Activated CD8-positive, alpha-beta memory T cell treated with anti-CD3 and anti-CD28 coated beads, Interleukin-2, amount 10 ng/mL, durations not matched to agents 7 days and 5 days (primary cell): ENCODE measurements at regions of chr14 and their contacts with region 1.

Region 1: GRCh38 chr14:24310646-24311604 is at the start of gene LTB4R:
- DNase-seq: peak; percentile 80
- ATAC-seq: peak; percentile 90
- H3K4me3 Mint-ChIP-seq: peak within 1 kb of the TSS; percentile 75
- H3K27ac Mint-ChIP-seq: peak within 1 kb of the TSS; percentile 87
- H3K4me1 Mint-ChIP-seq: peaks cover 72% of the 10 kb centered on the region
- H3K27me3 Mint-ChIP-seq: no peaks in the 10 kb centered on the region
- total RNA-seq, gene LTB4R: 15.6 to 32.5 TPM

Region 2: DNA sequence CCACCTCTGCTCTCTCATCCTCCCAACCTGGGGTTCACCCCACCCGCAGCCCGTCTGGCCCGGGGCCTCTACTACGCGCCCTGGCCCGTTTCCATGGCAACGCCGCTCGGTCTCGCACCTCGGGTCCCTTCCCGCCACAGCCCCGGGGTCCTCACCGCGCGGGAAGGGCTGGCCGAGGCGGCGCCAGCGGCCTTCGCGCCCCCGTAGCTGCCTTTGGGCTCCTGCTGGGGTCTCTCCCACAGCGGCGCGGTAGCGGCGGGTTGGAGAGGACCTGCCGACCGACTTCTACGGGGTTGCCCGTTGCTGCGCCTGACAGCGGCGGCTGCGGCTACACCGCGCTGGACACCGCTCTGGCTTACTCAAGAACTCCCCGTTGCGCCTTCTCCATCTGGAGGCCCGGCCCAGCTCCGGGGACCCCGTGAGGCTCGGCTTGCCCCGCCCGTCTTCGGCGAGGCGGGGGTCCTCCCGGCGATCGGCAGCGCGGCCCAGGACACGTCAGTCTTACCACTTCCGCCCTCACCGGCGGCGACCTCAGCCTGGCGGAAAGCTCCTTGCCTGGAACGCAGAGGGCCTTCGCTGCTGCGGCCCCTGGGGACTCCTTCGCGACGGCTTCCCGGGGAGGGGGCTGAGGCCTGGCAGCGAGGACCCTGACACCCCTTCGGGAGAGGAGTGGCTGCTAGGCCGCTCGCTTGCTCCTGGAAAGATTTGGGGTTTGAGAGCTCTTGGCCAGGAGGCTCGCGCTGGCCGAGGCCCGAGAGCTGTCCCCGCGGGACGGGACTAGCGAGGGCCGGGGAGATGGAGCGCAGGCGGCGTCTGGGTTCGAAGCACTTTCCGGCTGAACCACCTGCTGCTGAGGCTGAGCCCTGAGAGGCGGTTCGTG is 115.5 kb before region 1 on chr14 and contains the start of gene TM9SF1:
- CTCF ChIA-PET with region 1: interaction called, 10 read pairs
- DNase-seq: peak; percentile 93
- ATAC-seq: peak; percentile 92
- H3K4me3 Mint-ChIP-seq: peak within 1 kb of the TSS; percentile 89
- H3K27ac Mint-ChIP-seq: peak within 1 kb of the TSS; percentile 95
- H3K4me1 Mint-ChIP-seq: peaks cover 56% of the 10 kb centered on the region
- H3K27me3 Mint-ChIP-seq: no peaks in the 10 kb centered on the region
- total RNA-seq, gene TM9SF1: 26.7 to 32.8 TPM

Region 3: DNA sequence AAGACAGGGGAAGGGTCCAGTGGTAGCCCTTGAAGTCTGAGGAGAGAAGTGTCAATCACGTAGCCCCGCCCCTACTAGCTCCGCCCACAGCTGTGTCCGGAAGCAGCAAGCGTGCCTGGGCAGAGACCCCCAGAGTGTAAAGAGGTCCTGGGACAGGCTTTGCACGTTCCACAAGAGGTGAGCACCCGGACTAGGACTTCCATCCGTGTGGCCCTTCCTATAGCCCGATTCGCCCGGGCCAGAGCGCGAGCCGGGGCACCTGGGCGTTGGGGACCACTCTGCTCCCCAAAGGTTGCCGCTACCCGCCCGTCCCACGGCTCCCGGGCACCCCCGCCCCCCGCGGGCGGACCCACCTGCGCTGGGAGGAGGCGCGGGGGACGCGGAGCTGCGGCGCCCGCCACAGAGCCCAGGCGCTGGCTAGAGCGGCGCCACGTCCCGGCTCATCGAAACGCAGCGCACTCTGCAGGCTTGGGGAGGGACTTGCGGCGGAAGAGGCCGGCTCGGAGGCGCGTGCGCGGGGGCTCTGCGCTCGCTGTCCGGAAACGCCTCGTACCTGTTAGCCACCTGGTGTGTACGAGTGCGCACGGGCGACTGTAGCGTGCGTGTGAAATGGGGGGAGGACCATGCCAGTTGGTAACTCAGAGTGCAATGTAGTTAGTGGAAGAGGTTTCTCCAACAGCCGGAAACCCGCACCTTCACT is 39.6 kb before region 1 on chr14 and contains the start of gene RABGGTA:
- CTCF ChIA-PET with region 1: interaction called, 51 read pairs
- DNase-seq: peak; percentile 92
- ATAC-seq: peak; percentile 92
- H3K4me3 Mint-ChIP-seq: peak within 1 kb of the TSS; percentile 84
- H3K27ac Mint-ChIP-seq: peak within 1 kb of the TSS; percentile 93
- H3K4me1 Mint-ChIP-seq: peaks cover 41% of the 10 kb centered on the region
- H3K27me3 Mint-ChIP-seq: no peaks in the 10 kb centered on the region
- total RNA-seq, gene RABGGTA: 34.3 to 44.6 TPM

Region 4: GRCh38 chr14:24289649-24290249 is 21.2 kb before region 1 on chr14:
- CTCF ChIA-PET with region 1: interaction called, 169 read pairs
- DNase-seq: peak; percentile 88
- ATAC-seq: peak; percentile 93
- H3K4me3 Mint-ChIP-seq: no peak overlapping the region
- H3K27ac Mint-ChIP-seq: no peak overlapping the region
- H3K4me1 Mint-ChIP-seq: peaks cover 29% of the 10 kb centered on the region
- H3K27me3 Mint-ChIP-seq: peaks cover 25% of the 10 kb centered on the region

Region 5: GRCh38 chr14:24339284-24340151 is 28.6 kb after region 1 on chr14 and contains the start of gene RIPK3:
- CTCF ChIA-PET with region 1: interaction called, 120 read pairs
- DNase-seq: peak; percentile 86
- ATAC-seq: peak; percentile 94
- H3K4me3 Mint-ChIP-seq: peak within 1 kb of the TSS; percentile 91
- H3K27ac Mint-ChIP-seq: peak within 1 kb of the TSS; percentile 88
- H3K4me1 Mint-ChIP-seq: peaks cover 33% of the 10 kb centered on the region
- H3K27me3 Mint-ChIP-seq: peaks cover 25% of the 10 kb centered on the region
- total RNA-seq, gene RIPK3: 22.9 to 29.4 TPM

Region 6: DNA sequence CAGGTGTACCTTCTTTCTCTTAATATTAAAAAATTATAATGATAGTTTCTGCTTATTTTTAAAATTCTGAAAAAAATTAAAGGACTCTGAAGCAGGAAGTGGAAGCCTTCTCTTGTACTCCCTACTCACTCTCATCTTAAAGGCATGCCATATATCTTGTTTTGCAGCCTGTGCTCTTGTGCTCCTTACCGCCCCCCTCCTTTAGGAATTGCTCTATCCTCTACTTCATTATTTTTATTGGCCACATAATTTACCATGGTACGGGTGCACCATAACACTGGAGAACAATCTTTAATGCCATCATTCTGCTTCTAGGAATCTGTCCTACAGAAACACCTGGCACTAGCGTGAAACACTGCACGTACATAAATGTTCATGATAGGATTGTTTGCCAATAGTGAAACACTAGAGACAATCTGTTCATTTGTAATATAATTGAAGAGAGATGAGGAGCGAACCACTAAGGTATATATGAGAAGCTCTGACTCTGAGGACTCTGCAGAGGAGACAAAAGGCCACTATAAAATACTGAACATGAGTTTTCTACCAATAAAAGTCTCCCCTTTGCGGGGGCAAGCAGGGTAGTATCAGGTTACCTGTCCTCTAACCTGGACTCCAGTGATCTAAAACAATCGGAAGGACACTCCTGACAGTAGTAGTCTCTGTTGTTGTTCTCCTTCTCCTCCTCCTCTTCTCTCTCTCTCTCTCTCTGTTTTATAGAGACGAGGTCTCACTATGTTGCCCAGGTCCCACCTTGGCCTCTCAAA is 81.6 kb after region 1 on chr14:
- CTCF ChIA-PET with region 1: no interaction called
- DNase-seq: no peak
- ATAC-seq: no peak
- H3K4me3 Mint-ChIP-seq: no peak overlapping the region
- H3K27ac Mint-ChIP-seq: no peak overlapping the region
- H3K4me1 Mint-ChIP-seq: peaks cover 6% of the 10 kb centered on the region
- H3K27me3 Mint-ChIP-seq: peaks cover 54% of the 10 kb centered on the region

Region 7: DNA sequence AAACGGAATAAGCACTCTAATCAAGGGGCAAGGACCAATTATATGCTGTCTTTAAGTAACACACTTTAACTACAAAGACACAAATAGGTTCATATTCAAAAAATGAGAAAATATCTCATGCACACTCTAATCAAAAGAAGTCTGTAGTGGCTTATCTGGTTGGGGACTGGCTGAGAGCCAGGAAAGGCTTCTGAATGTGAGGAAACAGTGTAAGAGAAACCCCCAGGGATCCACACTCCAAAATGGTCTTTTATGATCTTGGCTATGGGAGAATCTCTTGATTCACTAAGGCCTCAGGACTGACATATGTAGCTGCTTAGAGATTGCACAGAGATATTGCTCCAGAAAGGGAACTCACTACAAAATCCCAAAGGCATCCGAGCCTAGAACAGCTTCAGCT is 254.8 kb after region 1 on chr14:
- CTCF ChIA-PET with region 1: no interaction called
- DNase-seq: no peak
- ATAC-seq: no peak
- H3K4me3 Mint-ChIP-seq: no peak overlapping the region
- H3K27ac Mint-ChIP-seq: no peak overlapping the region
- H3K4me1 Mint-ChIP-seq: no peaks in the 10 kb centered on the region
- H3K27me3 Mint-ChIP-seq: peaks cover 21% of the 10 kb centered on the region